Activated CD8-positive, alpha-beta T cell treated with anti-CD3 and anti-CD28 coated beads for 36 hours (primary cell): ENCODE measurements at regions of chr3 and their contacts with region 1.

Region 1: DNA sequence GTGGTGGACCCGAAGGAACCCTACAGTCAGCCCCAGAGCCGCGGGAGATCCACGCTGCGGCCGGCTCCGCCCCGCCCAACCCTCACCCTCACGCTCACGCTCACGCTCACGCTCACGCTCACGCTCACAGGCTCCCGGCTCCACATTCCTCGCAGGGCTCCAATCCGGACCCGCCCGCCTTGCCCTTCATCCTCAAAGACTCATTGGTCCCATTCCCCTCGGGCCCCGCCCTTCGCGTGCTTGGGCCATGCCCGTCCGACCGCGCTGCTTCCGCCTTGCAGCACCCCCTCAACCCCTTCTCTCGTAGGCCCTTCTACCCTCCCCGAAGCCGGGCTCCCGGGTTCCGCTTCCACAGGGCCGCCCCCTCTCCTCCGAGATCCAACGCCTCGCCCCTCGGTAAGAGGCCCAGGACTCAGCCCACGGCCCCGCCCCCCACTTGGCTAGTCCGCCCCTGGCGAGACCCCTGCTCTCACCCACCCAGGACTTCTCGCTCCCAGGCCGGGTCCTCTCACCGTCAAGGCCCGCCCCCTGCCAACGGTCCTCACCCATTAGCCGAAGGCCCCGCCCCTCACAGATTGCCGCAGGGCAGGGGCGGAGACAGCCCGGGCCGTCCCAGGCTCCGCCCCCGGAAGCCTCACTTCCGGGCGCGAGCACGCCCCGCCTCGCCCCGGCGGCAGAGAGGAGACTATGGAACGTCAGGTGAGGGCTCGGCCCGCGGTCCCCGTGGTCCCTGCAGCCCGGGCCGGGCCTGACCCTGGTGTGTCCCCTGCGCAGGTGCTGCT is at the start of gene APEH:
- DNase-seq: peak; percentile 99
- ATAC-seq: peak; percentile 88
- H3K4me3 Mint-ChIP-seq: peak within 1 kb of the TSS; percentile 95
- H3K27ac Mint-ChIP-seq: peak within 1 kb of the TSS; percentile 98
- H3K4me1 Mint-ChIP-seq: peaks cover 36% of the 10 kb centered on the region
- H3K27me3 Mint-ChIP-seq: no peaks in the 10 kb centered on the region
- CTCF ChIP-seq: no peak
- total RNA-seq, gene APEH: 165 to 166 TPM

Region 2: GRCh38 chr3:49553692-49554632 is 119.9 kb before region 1 on chr3 and contains the start of gene BSN:
- CTCF ChIA-PET with region 1: interaction called, 13 read pairs
- POLR2A ChIA-PET with region 1: no interaction called
- intact Hi-C with region 1: no loop called
- DNase-seq: peak; percentile 93
- ATAC-seq: peak; percentile 93
- H3K4me3 Mint-ChIP-seq: peak within 1 kb of the TSS; percentile 90
- H3K27ac Mint-ChIP-seq: peak within 1 kb of the TSS; percentile 78
- H3K4me1 Mint-ChIP-seq: peaks cover 12% of the 10 kb centered on the region
- H3K27me3 Mint-ChIP-seq: peaks cover 18% of the 10 kb centered on the region
- CTCF ChIP-seq: no peak
- total RNA-seq, gene BSN: 0.09 TPM

Region 3: GRCh38 chr3:49566312-49566711 is 107.6 kb before region 1 on chr3:
- CTCF ChIA-PET with region 1: interaction called, 10 read pairs
- POLR2A ChIA-PET with region 1: no interaction called
- intact Hi-C with region 1: no loop called
- DNase-seq: no peak
- ATAC-seq: no peak
- H3K4me3 Mint-ChIP-seq: no peak overlapping the region
- H3K27ac Mint-ChIP-seq: no peak overlapping the region
- H3K4me1 Mint-ChIP-seq: no peaks in the 10 kb centered on the region
- H3K27me3 Mint-ChIP-seq: no peaks in the 10 kb centered on the region
- CTCF ChIP-seq: peak; percentile 37